ENCODE measurements at regions of chr13 and their contacts with region 1.

Region 1: DNA sequence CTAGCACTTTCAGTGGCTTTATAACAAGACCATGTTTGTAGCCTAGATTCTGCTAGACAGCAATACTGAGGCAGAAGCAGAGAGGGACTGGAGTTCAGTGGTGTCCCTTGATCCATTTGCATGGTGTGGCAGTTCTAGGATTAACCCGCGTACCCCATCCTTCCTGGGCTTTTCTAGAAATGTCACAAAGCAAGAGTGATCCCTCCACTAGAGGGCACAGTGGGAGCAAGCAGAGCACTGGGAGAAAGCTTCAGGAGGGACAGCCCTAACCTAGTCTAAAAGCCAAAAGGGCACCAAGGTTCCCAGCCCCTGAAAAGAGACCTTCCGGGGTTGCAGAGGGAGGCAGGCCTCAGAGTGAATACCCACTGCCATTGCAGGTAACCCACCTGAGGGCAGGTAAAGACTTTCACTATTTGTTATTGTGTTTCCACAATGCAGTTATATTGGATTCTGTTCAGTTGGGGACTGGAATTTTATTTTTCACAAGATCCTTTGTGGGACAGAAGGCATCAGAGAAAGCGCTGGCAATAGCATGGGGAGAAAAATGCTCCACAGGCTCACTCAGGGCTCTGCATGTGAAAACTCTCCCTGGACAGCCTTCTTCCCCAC is 170.6 kb downstream of the FLT1 start:
- DNase-seq: peak; percentile 80
- H3K4me3 Mint-ChIP-seq: no peak overlapping the region
- H3K27ac Mint-ChIP-seq: no peak overlapping the region
- H3K4me1 Mint-ChIP-seq: no peaks in the 10 kb centered on the region
- H3K27me3 Mint-ChIP-seq: no peaks in the 10 kb centered on the region
- CTCF ChIP-seq: peak; percentile 78

Region 2: GRCh38 chr13:28313579-28313978 is 10.7 kb before region 1 on chr13:
- CTCF ChIA-PET with region 1: interaction called, 14 read pairs
- POLR2A ChIA-PET with region 1: no interaction called
- intact Hi-C with region 1: no loop called
- DNase-seq: no peak
- H3K4me3 Mint-ChIP-seq: no peak overlapping the region
- H3K27ac Mint-ChIP-seq: no peak overlapping the region
- H3K4me1 Mint-ChIP-seq: no peaks in the 10 kb centered on the region
- H3K27me3 Mint-ChIP-seq: no peaks in the 10 kb centered on the region
- CTCF ChIP-seq: no peak

Region 3: DNA sequence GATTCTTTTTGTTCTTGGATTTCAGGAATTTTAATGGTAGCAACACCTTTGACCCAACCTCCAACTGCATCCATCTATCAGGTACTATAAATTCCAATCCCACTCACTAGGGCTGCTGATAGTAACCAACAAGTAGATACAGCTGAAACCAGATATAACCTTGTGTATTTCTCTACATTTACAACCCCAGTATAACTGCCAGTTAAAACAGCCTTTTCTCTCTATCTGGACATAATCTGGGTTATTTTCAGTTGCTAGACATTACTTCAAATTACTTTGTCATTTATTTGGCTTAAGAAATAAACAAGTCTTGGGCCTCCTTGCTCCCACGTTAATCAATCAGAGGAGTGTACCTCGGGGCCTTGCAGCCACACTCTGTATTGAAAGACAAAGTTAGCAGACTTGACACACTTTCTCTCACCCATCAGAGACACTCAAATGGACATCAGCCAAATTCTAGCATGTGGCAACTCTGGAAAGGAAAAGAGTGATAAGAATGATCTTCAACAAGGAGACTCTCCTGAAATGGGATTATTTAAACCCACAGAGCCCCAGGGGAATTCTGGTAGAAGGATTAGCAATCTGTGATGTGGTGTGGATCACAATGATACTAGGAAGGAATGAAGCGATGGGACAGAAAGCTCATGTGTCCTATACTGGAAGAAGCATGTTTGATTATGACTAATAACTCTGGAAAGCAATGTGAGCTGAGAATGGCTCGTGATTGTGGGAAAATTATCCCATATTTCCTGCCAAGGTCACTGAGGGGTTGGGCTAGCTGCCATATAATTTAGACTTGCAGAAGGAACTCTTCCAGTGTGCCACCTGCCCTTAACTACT is 13.1 kb after region 1 on chr13:
- CTCF ChIA-PET with region 1: interaction called, 13 read pairs
- POLR2A ChIA-PET with region 1: no interaction called
- intact Hi-C with region 1: no loop called
- DNase-seq: peak; percentile 57
- H3K4me3 Mint-ChIP-seq: no peak overlapping the region
- H3K27ac Mint-ChIP-seq: no peak overlapping the region
- H3K4me1 Mint-ChIP-seq: peaks cover 16% of the 10 kb centered on the region
- H3K27me3 Mint-ChIP-seq: no peaks in the 10 kb centered on the region
- CTCF ChIP-seq: no peak

Region 4: DNA sequence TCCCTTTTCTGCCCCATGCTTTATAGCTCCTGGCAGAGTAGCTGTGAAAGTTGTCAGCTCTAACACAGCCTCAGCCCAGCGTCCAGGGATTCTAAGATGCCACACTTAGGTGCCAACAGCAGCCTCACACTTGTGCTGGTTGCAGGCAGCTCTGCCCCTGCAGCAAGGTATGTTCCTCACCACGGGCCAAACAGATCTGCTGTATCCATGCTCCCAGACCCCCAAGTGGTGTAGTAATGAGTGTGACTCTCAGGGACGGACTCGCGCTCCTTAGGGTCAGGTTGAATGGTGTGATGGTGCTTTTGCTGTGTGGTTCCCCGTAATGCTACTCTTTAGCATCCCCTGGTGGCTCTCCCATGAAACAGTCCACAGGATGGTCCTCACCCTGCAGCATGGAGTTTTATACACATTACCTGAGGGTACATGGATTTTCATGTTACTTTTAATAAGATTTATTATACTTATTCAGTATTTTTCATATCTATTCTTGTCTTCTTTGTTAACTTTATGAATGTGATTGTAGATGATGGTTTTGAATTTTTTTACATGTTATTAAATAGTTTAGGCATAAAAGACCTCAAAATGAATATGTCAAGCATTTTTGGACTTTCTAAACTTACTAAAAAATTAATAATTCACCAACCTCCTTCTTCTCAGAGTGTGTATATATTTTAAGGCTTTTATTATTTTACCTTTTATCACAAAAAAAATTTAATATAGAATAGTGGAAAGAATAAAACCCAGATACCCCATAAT is 1038.7 kb after region 1 on chr13:
- CTCF ChIA-PET with region 1: interaction called, 3 read pairs
- POLR2A ChIA-PET with region 1: no interaction called
- intact Hi-C with region 1: loop called (anchors 2 kb)
- DNase-seq: peak; percentile 66
- H3K4me3 Mint-ChIP-seq: no peak overlapping the region
- H3K27ac Mint-ChIP-seq: no peak overlapping the region
- H3K4me1 Mint-ChIP-seq: no peaks in the 10 kb centered on the region
- H3K27me3 Mint-ChIP-seq: peaks cover 40% of the 10 kb centered on the region
- CTCF ChIP-seq: peak; percentile 84

Region 5: DNA sequence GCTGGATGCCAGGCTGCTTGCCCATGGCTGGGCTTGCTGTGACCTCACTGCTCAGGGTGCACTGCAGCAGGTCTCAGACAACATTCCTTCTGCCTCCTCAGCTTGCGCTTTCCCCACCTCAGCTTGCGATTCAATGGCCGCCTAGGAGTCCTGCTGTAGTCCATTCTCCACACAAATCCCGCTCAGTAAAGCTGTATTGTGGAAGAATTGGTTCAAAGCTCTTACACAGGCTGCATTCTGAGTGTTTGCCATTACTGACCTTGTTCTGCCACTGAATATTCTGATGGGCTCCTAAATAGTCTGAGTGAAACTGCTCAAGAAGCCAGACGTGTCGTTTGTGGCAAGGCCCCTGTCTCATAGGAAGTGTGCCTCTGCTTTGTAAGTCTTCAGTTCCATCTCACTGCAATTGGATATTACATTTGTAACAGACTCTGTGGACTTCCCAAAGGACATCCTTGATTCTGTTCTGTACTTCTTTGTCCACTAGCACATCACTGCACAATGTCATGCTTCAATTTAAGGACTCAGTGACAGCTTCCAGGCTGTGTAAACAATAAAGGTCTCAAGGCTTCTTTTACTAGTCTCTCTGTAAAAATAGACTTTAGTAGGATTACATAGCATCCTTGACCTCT is 1933.3 kb after region 1 on chr13:
- CTCF ChIA-PET with region 1: no interaction called
- POLR2A ChIA-PET with region 1: no interaction called
- intact Hi-C with region 1: no loop called
- DNase-seq: no peak
- H3K4me3 Mint-ChIP-seq: no peak overlapping the region
- H3K27ac Mint-ChIP-seq: no peak overlapping the region
- H3K4me1 Mint-ChIP-seq: no peaks in the 10 kb centered on the region
- H3K27me3 Mint-ChIP-seq: no peaks in the 10 kb centered on the region
- CTCF ChIP-seq: no peak

Measured in MCF 10A (cell line).